ENCODE measurements at regions of chr19 and their contacts with region 1.

Region 1: DNA sequence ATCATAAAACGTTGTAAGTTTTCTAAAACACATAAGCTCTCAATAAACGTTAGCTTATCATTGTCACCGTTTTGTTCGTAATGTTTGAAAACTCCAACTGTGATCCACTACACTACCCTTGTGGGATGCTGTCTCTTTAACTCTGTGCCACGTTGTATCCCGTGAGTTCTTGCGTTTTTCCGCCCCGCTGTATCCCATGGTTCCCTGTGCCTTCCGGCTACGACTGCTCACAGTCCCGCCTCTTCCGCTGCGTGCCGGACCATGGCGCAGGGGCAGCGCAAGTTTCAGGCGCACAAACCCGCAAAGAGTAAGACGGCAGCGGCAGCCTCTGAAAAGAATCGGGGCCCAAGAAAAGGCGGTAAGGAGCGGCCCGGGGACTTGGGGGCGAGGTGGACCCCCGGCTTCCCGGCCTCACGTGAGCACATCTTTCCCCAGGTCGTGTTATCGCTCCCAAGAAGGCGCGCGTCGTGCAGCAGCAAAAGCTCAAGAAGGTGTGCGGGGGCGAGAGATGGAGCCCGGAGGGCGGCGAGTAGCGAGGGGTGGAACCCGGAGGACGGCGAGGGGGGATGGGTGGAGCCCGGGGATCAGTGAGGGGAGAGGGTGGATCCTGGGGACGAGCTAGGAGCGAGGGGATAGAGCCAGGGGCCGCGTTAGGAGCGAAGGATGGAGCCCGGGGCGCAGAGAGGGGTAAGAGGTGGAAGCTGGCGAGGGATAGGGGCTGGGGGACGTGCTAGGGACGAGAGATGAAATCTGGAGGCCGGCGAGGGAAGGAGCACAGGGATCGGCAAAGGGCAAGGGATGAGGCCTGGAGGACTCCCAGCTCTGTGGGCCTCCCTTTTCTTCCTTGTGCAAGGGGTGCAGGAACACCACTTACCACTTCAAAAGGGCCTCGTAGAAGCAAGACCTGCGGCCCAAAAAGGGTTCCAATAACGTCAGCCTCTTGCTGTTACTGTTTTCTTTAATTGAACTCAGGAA is at the start of gene C19orf53:
- DNase-seq: peak; percentile 83
- H3K4me3 ChIP-seq: peak within 1 kb of the TSS; percentile 96
- H3K27ac ChIP-seq: peak within 1 kb of the TSS; percentile 96
- H3K27me3 ChIP-seq: no peaks in the 10 kb centered on the region
- CTCF ChIP-seq: no peak
- polyA plus RNA-seq, gene C19orf53: 145 and 213 TPM in 2 replicates

Region 2: GRCh38 chr19:13557756-13558398 is 216.6 kb before region 1 on chr19:
- CTCF ChIA-PET with region 1: no interaction called
- POLR2A ChIA-PET with region 1: no interaction called
- DNase-seq: no peak
- H3K4me3 ChIP-seq: no peak overlapping the region
- H3K27ac ChIP-seq: no peak overlapping the region
- H3K27me3 ChIP-seq: peaks cover 18% of the 10 kb centered on the region
- CTCF ChIP-seq: no peak

Region 3: GRCh38 chr19:13748169-13748828 is 26.2 kb before region 1 on chr19:
- CTCF ChIA-PET with region 1: interaction called, 11 read pairs
- POLR2A ChIA-PET with region 1: interaction called, 5 read pairs
- DNase-seq: no peak
- H3K4me3 ChIP-seq: peak overlapping the region; percentile 84
- H3K27ac ChIP-seq: peak overlapping the region; percentile 68
- H3K27me3 ChIP-seq: no peaks in the 10 kb centered on the region
- CTCF ChIP-seq: no peak

Region 4: DNA sequence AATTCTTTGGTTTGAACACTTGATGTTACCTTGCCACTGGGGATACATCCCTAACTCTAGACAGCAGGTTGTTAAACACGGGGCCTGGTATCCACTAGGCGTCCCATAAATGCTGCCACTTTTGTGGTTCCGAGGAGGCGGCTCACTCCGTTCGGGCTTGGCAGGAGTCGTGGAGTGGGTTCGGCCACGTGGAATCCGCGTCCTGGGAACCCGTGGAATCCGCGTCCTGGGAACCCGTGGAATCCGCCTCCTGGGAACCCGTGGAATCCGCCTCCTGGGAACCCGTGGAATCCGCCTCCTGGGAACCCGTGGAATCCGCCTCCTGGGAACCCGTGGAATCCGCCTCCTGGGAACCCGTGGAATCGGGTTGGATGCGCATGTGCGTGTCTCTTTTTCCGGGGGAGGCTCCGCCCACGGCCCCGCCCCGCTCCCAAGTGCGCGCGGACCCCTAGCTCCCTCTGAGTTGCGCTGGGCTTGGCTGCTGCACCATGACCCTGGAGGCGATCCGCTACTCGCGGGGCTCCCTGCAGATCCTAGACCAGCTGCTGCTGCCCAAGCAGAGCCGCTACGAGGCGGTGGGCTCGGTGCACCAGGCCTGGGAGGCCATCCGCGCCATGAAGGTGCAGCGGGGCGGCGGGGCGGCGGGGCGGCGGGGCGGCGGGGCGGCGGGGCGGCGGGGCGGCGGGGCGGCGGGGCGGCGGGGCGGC is 10.2 kb before region 1 on chr19 and contains the start of gene MRI1:
- CTCF ChIA-PET with region 1: no interaction called
- POLR2A ChIA-PET with region 1: interaction called, 27 read pairs
- DNase-seq: no peak
- H3K4me3 ChIP-seq: peak within 1 kb of the TSS; percentile 80
- H3K27ac ChIP-seq: peak within 1 kb of the TSS; percentile 57
- H3K27me3 ChIP-seq: no peaks in the 10 kb centered on the region
- CTCF ChIP-seq: no peak
- polyA plus RNA-seq, gene MRI1: 20.2 and 24.1 TPM in 2 replicates